Activated CD8-positive, alpha-beta T cell treated with anti-CD3 and anti-CD28 coated beads for 36 hours (primary cell): ENCODE measurements at regions of chr2 and their contacts with region 1.

Region 1: DNA sequence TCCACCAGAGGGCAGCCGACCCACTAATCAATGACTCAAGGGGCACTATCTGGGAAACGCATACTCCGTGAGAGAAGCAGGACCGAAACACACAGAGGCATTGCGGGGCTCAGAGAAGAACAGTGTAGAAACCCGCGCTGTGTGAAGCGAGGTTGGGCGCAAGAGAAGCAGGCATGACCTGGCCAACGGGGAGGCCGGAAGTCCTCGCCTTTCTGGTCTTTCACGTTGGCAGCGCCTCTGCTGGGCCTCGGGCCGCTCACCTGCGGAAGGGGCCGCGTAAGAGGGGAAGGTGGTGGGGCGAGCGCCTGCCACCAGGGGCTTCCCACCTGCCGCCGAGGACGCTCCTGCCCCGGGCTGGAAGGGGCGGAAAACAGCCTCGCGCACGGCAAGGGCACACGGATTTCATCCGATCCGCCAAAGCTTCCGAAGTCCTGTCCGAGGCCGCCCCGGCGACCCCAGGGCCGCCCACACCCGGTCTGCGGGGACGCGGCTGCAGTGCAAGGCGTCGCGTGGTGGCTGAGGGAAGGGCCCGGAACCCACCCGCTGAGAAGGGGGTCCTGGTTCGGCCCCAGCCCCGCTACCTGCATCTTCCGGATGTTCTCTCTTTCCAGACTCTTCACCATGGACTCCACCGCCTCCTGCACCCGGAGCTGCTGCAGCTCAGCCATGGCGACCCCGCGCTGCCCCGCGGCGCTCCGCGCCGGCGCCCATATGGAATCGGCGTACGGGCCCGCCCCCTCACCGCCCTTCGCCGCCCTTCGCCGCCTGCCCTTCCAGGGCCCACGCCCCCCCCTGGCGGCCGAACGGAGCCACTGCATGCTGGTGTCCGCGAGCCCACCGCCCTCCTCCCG is at the start of gene FAM136A:
- DNase-seq: peak; percentile 89
- ATAC-seq: peak; percentile 88
- H3K4me3 Mint-ChIP-seq: peak within 1 kb of the TSS; percentile 93
- H3K27ac Mint-ChIP-seq: peak within 1 kb of the TSS; percentile 97
- H3K4me1 Mint-ChIP-seq: peaks cover 34% of the 10 kb centered on the region
- H3K27me3 Mint-ChIP-seq: no peaks in the 10 kb centered on the region
- CTCF ChIP-seq: peak; percentile 90
- total RNA-seq, gene FAM136A: 63.0 to 68.9 TPM

Region 2: GRCh38 chr2:69914170-69914960 is 387.2 kb before region 1 on chr2:
- CTCF ChIA-PET with region 1: interaction called, 9 read pairs
- POLR2A ChIA-PET with region 1: interaction called, 9 read pairs
- intact Hi-C with region 1: loop called (anchors 5 kb)
- DNase-seq: peak; percentile 100
- ATAC-seq: peak; percentile 96
- H3K4me3 Mint-ChIP-seq: peak overlapping the region; percentile 86
- H3K27ac Mint-ChIP-seq: peak overlapping the region; percentile 92
- H3K4me1 Mint-ChIP-seq: peaks cover 37% of the 10 kb centered on the region
- H3K27me3 Mint-ChIP-seq: no peaks in the 10 kb centered on the region
- CTCF ChIP-seq: no peak

Region 3: GRCh38 chr2:70312560-70312959 is 11.0 kb after region 1 on chr2:
- CTCF ChIA-PET with region 1: interaction called, 40 read pairs
- POLR2A ChIA-PET with region 1: interaction called, 3 read pairs
- intact Hi-C with region 1: no loop called
- DNase-seq: no peak
- ATAC-seq: no peak
- H3K4me3 Mint-ChIP-seq: no peak overlapping the region
- H3K27ac Mint-ChIP-seq: no peak overlapping the region
- H3K4me1 Mint-ChIP-seq: peaks cover 7% of the 10 kb centered on the region
- H3K27me3 Mint-ChIP-seq: peaks cover 3% of the 10 kb centered on the region
- CTCF ChIP-seq: no peak

Region 4: DNA sequence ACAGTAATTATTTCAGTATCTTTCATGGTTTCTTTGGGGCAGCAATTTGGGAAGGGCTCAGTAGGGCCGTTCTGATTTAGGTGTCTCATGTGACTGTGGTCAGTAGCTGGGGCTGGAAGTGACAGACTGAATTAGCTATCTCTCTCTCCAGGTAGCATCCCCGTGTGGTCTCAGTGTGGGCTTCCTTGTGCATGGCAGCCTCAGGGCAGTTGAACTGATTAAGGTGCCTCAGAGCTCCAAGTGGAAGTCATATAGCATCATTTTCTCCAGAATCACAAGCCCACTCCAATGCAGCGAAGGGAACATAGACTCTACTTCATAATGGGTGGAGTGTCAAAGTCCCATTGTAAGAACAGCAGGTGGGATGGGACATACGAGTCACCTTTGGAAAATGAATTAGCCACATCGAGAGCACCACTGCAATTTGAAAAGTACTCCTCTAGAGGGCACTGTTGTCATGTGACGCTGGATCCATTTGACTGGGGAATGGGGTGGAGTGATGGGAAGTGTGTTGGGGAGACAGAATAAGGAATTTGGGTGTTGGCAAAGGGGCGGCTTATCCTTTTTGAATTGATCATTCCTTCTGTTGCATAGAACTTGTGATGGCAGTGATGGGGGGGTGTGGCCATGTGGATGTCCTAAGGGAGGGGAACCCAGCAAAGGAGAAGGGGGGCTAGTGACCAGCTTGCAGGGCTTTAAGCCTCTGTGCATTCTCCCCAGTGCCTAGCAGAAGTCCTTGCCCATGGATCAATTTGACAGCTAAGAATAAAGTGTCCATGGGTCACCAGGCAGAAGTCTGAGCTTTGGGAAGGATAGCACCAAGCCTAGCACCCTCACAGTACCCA is 39.6 kb after region 1 on chr2:
- CTCF ChIA-PET with region 1: interaction called, 31 read pairs
- POLR2A ChIA-PET with region 1: no interaction called
- intact Hi-C with region 1: no loop called
- DNase-seq: peak; percentile 26
- ATAC-seq: peak; percentile 77
- H3K4me3 Mint-ChIP-seq: no peak overlapping the region
- H3K27ac Mint-ChIP-seq: no peak overlapping the region
- H3K4me1 Mint-ChIP-seq: no peaks in the 10 kb centered on the region
- H3K27me3 Mint-ChIP-seq: peaks cover 2% of the 10 kb centered on the region
- CTCF ChIP-seq: peak; percentile 93

Region 5: DNA sequence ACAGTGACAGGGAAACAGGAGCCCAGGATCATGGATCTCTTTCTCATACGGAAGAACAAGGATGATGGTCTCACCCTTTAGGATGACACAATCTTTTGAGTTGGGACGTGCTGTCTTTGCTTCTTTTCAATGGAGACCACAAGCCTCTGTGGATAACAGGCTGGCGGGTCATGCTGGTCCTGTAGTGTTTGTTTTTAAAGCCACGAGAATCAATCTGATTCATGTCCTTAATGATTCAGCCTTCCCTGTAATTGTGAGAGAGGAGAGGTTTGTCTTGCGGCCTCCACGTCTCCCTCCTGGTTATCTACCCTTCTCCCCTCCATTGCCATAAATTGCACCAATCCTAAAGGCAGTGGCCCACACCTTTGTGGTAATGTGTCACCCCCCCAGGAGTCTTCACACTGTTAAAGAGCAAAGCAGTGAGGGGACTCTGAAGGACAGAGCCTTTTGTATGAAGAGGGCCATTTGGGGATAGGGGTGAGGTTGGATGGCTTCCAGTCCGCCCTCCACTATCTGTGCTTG is 339.8 kb after region 1 on chr2:
- CTCF ChIA-PET with region 1: interaction called, 98 read pairs
- POLR2A ChIA-PET with region 1: no interaction called
- intact Hi-C with region 1: loop called (anchors 5 kb)
- DNase-seq: no peak
- ATAC-seq: peak; percentile 45
- H3K4me3 Mint-ChIP-seq: no peak overlapping the region
- H3K27ac Mint-ChIP-seq: no peak overlapping the region
- H3K4me1 Mint-ChIP-seq: peaks cover 12% of the 10 kb centered on the region
- H3K27me3 Mint-ChIP-seq: no peaks in the 10 kb centered on the region
- CTCF ChIP-seq: no peak

Region 6: DNA sequence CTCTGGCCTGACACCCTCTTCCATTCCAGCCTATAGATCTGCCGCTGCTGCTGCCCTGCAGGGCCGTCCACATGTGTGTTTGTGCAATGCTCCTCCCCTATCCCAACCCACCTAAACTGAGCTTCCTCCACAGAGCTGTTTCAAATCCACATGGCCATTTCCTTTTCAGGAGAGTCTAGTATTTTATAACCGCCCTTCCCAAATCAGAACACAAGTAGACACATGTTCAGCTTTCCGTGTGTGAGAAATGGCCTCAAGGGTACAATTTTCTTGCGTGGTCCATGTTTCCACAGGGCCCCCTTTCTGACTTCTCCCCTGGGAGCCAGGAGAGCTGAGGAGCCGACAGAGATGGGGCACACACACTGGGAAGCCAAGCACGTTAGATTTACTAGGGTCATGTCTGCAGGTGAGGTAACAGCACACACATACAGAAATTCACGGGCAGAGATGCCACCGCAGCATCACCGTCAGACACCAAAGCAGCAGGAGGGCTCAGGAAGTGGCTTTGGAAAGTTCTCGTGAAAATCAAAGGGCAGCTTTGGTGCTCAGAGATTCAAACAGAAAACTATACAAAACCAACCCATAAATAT is 354.9 kb after region 1 on chr2:
- CTCF ChIA-PET with region 1: interaction called, 98 read pairs
- POLR2A ChIA-PET with region 1: no interaction called
- intact Hi-C with region 1: no loop called
- DNase-seq: peak; percentile 70
- ATAC-seq: peak; percentile 67
- H3K4me3 Mint-ChIP-seq: peak overlapping the region; percentile 27
- H3K27ac Mint-ChIP-seq: peak overlapping the region; percentile 61
- H3K4me1 Mint-ChIP-seq: peaks cover 34% of the 10 kb centered on the region
- H3K27me3 Mint-ChIP-seq: peaks cover 6% of the 10 kb centered on the region
- CTCF ChIP-seq: no peak